ENCODE measurements at regions of chr5 and their contacts with region 1.

Region 1: DNA sequence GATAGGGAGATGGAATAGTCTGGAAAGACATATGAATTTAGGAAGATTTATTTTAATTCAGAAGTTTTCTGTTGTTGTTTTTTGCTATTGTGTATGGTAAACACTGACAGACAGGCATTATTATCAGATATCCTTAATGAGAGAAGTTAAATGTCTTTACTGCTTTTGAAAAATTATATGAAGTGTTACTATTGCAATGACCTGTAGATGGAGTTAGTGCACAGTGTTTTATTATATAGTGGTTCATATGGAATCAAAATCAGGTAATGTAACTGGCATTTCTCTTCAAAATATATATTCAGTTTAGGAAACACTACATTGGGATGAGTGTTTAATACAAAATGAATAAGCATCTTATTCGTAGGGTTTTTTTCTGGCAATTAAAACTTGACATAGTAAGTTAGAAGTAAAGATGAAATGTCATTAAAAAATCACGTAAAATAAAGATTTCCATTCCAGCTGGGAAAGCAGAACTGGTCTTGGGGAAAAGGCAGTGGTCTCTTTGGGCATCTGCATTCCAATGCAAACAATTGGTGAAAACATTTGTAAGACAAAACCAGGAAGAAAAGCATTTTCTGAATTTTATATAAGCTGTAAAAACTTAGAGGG is 3.9 kb downstream of the GABRA1 start:
- DNase-seq: peak; percentile 30
- H3K4me3 Mint-ChIP-seq: no peak overlapping the region
- H3K27ac Mint-ChIP-seq: no peak overlapping the region
- H3K4me1 Mint-ChIP-seq: no peaks in the 10 kb centered on the region
- H3K27me3 Mint-ChIP-seq: peaks cover 79% of the 10 kb centered on the region
- CTCF ChIP-seq: peak; percentile 45

Region 2: DNA sequence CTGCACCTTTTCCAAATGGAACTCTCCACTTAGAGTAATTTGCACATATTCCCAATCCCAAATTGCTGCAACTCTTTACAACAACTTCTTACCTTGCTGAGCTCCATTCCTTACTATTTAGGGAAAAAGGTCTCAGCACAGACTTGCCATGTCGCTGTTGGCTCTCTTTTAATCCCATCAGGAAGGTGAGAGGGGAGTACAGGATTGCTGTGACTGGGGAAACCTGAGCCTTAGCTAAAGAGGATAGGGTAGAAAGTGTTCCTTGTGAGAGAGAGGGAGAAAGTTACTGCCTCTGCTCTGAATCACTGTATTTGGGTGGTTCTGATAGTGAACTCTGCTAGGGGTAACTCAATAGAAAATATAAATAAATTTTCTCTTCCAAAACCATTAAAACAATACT is 47.5 kb before region 1 on chr5:
- CTCF ChIA-PET with region 1: no interaction called
- POLR2A ChIA-PET with region 1: no interaction called
- intact Hi-C with region 1: no loop called
- DNase-seq: no peak
- H3K4me3 Mint-ChIP-seq: no peak overlapping the region
- H3K27ac Mint-ChIP-seq: no peak overlapping the region
- H3K4me1 Mint-ChIP-seq: no peaks in the 10 kb centered on the region
- H3K27me3 Mint-ChIP-seq: peaks cover 51% of the 10 kb centered on the region
- CTCF ChIP-seq: no peak

Region 3: GRCh38 chr5:162209005-162209605 is 357.3 kb after region 1 on chr5:
- CTCF ChIA-PET with region 1: interaction called, 4 read pairs
- POLR2A ChIA-PET with region 1: no interaction called
- intact Hi-C with region 1: loop called (anchors 10 kb)
- DNase-seq: peak; percentile 83
- H3K4me3 Mint-ChIP-seq: no peak overlapping the region
- H3K27ac Mint-ChIP-seq: no peak overlapping the region
- H3K4me1 Mint-ChIP-seq: peaks cover 12% of the 10 kb centered on the region
- H3K27me3 Mint-ChIP-seq: no peaks in the 10 kb centered on the region
- CTCF ChIP-seq: peak; percentile 71

Region 4: DNA sequence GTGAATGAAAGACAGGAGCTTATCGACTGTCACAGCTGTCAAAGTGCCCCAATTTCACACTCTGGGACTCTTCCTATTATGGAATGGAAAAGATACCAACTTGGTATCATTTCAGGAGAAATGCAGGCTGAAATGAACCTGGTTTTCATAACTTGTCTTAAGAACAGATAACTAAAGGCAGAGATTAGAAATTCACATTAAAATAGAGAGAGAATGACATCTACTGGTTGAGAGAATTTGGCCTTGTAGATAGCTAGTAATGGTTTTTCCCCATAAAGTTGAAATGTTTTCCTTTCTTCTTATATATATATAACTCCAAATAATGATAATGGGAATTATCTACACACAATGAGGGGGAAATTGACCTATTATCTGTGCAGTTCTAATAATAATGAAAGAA is 985.4 kb after region 1 on chr5:
- CTCF ChIA-PET with region 1: no interaction called
- POLR2A ChIA-PET with region 1: no interaction called
- intact Hi-C with region 1: loop called (anchors 10 kb)
- DNase-seq: no peak
- H3K4me3 Mint-ChIP-seq: no peak overlapping the region
- H3K27ac Mint-ChIP-seq: no peak overlapping the region
- H3K4me1 Mint-ChIP-seq: no peaks in the 10 kb centered on the region
- H3K27me3 Mint-ChIP-seq: no peaks in the 10 kb centered on the region
- CTCF ChIP-seq: no peak

Region 5: DNA sequence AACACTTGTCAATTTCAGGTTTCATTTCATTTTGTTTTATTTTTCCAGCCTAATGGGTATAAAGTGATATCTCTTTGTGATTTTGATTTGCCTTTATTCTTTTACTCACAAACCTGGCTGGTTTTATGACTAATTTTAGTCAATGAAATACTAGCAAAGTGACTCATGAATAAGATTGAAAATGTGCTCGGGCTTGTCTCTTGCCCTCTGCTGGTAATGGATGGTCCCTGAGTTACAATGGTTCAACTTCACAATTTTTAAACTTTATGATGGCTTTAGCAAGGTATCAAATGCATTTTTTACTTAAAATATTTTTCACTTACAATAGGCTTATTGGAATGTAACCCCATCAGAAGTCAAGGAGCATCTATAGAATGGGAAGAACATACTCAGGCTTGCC is 1154.2 kb after region 1 on chr5:
- CTCF ChIA-PET with region 1: interaction called, 5 read pairs
- POLR2A ChIA-PET with region 1: no interaction called
- intact Hi-C with region 1: loop called (anchors 5 kb)
- DNase-seq: peak; percentile 63
- H3K4me3 Mint-ChIP-seq: no peak overlapping the region
- H3K27ac Mint-ChIP-seq: no peak overlapping the region
- H3K4me1 Mint-ChIP-seq: peaks cover 14% of the 10 kb centered on the region
- H3K27me3 Mint-ChIP-seq: no peaks in the 10 kb centered on the region
- CTCF ChIP-seq: peak; percentile 64

Region 6: DNA sequence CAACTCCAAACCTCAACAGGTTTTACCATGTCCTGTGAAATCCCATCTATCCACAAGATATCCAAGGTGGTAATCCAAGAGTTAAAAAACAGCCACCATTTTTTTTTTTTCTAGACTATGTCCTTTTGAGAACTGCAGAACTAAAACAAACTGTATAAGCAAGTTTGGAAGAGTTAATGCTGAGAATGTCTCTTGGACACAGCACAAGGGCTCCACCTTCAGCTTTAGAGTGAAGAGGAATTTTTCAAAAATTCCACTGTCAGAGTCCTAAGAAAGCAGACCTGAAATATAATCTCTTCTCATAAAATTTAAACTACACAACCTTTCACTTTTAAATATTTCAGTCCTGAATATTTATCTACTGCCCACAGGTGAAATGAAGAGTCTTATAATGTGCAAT is 1417.8 kb after region 1 on chr5:
- CTCF ChIA-PET with region 1: interaction called, 4 read pairs
- POLR2A ChIA-PET with region 1: no interaction called
- intact Hi-C with region 1: loop called (anchors 5 kb)
- DNase-seq: peak; percentile 45
- H3K4me3 Mint-ChIP-seq: no peak overlapping the region
- H3K27ac Mint-ChIP-seq: no peak overlapping the region
- H3K4me1 Mint-ChIP-seq: no peaks in the 10 kb centered on the region
- H3K27me3 Mint-ChIP-seq: peaks cover 81% of the 10 kb centered on the region
- CTCF ChIP-seq: peak; percentile 50